ENCODE measurements at regions of chr12 and their contacts with region 1.

Region 1: GRCh38 chr12:107131832-107132616 is 38.7 kb upstream of the CRY1 start:
- DNase-seq: peak; percentile 52
- H3K4me3 ChIP-seq: peak overlapping the region in 1 of 2 experiments; percentile 28; a peak in 1 of 4 replicates
- H3K27ac ChIP-seq: peak overlapping the region in 1 of 2 experiments; percentile 76; a peak in 1 of 4 replicates
- H3K4me1 ChIP-seq: peaks cover 0 to 19% of the 10 kb centered on the region in 2 experiments; a peak in 2 of 4 replicates
- H3K27me3 ChIP-seq: no peaks in the 10 kb centered on the region
- CTCF ChIP-seq: peak; percentile 94
- EP300 ChIP-seq: no peak
- RAD21 ChIP-seq: peak; percentile 97

Region 2: GRCh38 chr12:107017042-107017441 is 115.0 kb before region 1 on chr12:
- CTCF ChIA-PET with region 1: no interaction called
- POLR2A ChIA-PET with region 1: no interaction called
- DNase-seq: no peak
- H3K4me3 ChIP-seq: no peak overlapping the region
- H3K27ac ChIP-seq: no peak overlapping the region
- H3K4me1 ChIP-seq: no peaks in the 10 kb centered on the region
- H3K27me3 ChIP-seq: no peaks in the 10 kb centered on the region
- CTCF ChIP-seq: no peak
- EP300 ChIP-seq: no peak
- RAD21 ChIP-seq: no peak

Region 3: GRCh38 chr12:107115119-107115518 is 16.9 kb before region 1 on chr12:
- CTCF ChIA-PET with region 1: interaction called, 14 read pairs
- POLR2A ChIA-PET with region 1: no interaction called
- DNase-seq: no peak
- H3K4me3 ChIP-seq: no peak overlapping the region
- H3K27ac ChIP-seq: no peak overlapping the region
- H3K4me1 ChIP-seq: peaks cover 0 to 4% of the 10 kb centered on the region in 2 experiments; a peak in 1 of 4 replicates
- H3K27me3 ChIP-seq: peaks cover 11% of the 10 kb centered on the region; the same call in 1 of the 2 replicates
- CTCF ChIP-seq: no peak
- EP300 ChIP-seq: no peak
- RAD21 ChIP-seq: no peak

Region 4: DNA sequence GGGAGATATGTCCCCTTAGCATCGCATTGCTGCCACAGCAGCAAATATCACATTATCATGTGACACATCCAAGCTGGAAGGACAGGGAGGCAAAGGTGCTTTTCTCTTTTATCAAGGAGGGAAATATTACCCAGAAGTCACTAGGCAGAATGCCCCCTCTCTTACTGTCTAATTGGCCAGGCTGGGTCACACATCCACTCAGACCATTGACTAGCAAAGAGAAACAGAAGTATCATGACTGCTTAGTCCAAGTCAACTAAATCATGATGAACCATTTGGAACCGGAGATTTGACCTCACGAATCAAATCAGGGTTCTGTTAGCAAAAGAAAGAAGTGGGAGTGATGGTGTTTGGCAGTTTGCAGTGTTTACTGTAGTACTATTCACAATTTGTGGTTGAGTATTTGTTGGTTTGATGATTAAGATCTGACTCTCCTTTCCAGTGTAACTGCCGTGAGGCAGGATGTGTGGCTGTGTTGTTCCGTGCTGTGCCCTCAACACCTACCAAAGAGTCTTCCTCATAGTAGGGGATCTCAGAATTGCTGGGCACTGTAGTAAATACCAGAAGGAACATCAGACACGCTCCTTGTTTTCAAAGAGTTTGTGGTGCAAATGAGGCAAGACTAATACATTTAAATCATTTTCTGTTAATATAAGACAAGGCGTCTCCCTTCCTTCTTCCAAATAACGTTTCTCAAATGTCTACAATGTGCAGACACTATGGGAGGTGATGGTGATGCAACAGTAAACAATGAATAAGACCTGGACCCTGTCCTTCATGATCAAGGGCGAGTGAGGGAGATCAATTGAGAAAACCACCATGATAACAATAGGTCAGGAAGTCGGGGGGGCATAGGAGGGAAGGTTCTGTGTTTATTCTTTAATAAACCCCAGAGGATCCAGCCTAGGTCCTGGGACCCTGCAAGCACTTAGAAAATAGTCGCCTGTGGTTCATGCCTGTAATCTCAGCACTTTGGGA is 155.7 kb after region 1 on chr12:
- CTCF ChIA-PET with region 1: no interaction called
- POLR2A ChIA-PET with region 1: no interaction called
- DNase-seq: no peak
- H3K4me3 ChIP-seq: no peak overlapping the region
- H3K27ac ChIP-seq: no peak overlapping the region
- H3K4me1 ChIP-seq: no peaks in the 10 kb centered on the region
- H3K27me3 ChIP-seq: no peaks in the 10 kb centered on the region
- CTCF ChIP-seq: no peak
- EP300 ChIP-seq: no peak
- RAD21 ChIP-seq: no peak

Region 5: GRCh38 chr12:107317751-107318613 is 186.0 kb after region 1 on chr12:
- CTCF ChIA-PET with region 1: interaction called, 52 read pairs
- POLR2A ChIA-PET with region 1: no interaction called
- DNase-seq: peak; percentile 96
- H3K4me3 ChIP-seq: peak overlapping the region; percentile 46 to 69
- H3K27ac ChIP-seq: no peak overlapping the region
- H3K4me1 ChIP-seq: peaks cover 0 to 24% of the 10 kb centered on the region in 2 experiments; a peak in 1 of 4 replicates
- H3K27me3 ChIP-seq: peaks cover 17% of the 10 kb centered on the region; the same call in 1 of the 2 replicates
- CTCF ChIP-seq: no peak; the same call in 1 of the 2 replicates
- EP300 ChIP-seq: no peak
- RAD21 ChIP-seq: peak; percentile 43

Region 6: GRCh38 chr12:107402041-107403022 is 270.3 kb after region 1 on chr12:
- CTCF ChIA-PET with region 1: interaction called, 122 read pairs
- POLR2A ChIA-PET with region 1: interaction called, 3 read pairs
- DNase-seq: peak; percentile 64
- H3K4me3 ChIP-seq: no peak overlapping the region
- H3K27ac ChIP-seq: peak overlapping the region in 1 of 2 experiments; percentile 34; a peak in 2 of 4 replicates
- H3K4me1 ChIP-seq: peaks cover 0 to 43% of the 10 kb centered on the region in 2 experiments; a peak in 3 of 4 replicates
- H3K27me3 ChIP-seq: no peaks in the 10 kb centered on the region
- CTCF ChIP-seq: peak; percentile 71
- EP300 ChIP-seq: no peak
- RAD21 ChIP-seq: peak; percentile 84

Region 7: DNA sequence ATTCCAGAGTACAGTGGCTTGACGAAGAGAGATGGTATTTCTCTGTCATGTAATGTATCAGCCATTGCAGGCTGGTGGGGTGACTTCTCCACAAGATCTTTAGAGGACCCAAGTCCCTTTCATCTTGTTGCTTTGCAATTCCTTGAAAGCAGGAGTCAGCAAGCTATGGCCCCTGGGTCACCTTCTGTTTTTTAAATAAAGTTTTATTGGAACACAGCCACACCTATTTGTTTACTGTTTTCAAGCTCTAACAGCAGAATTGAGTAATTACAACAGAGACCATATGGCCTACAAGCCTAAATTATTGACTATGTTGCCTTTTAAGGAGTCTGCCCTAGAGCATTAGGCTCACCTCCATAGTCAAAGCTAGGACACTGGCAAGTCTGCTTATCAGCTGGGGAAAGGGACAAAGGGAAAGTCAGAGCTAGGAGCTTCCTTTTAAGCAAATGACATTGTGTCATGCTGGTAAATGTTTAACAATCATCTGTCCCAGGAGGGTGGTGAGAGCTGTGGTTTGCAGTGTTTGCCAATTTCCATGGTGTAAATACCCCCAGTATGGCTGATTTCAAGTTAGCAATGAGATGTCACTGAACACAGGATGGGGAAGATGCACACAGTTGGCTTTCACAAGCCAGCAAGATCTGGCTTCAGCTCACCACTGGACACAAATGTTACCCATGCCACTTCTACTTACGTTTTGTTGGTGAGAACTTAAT is 465.8 kb after region 1 on chr12:
- CTCF ChIA-PET with region 1: interaction called, 27 read pairs
- POLR2A ChIA-PET with region 1: no interaction called
- DNase-seq: no peak
- H3K4me3 ChIP-seq: no peak overlapping the region
- H3K27ac ChIP-seq: no peak overlapping the region
- H3K4me1 ChIP-seq: peaks cover 0 to 10% of the 10 kb centered on the region in 2 experiments; a peak in 1 of 4 replicates
- H3K27me3 ChIP-seq: no peaks in the 10 kb centered on the region
- CTCF ChIP-seq: no peak
- EP300 ChIP-seq: no peak
- RAD21 ChIP-seq: no peak